A549 (cell line): ENCODE measurements at regions of chr9 and their contacts with region 1.

Region 1: GRCh38 chr9:99140685-99141314 is 35.9 kb downstream of the TGFBR1 start:
- DNase-seq: peak; percentile 44 to 57
- ATAC-seq: peak; percentile 90 to 93; a peak in 5 of 6 replicates
- H3K4me3 ChIP-seq: no peak overlapping the region
- H3K27ac ChIP-seq: no peak overlapping the region
- H3K4me1 ChIP-seq: no peaks in the 10 kb centered on the region
- CTCF ChIP-seq: peak; percentile 84
- EP300 ChIP-seq: no peak
- POLR2A ChIP-seq: no peak
- RAD21 ChIP-seq: peak; percentile 87 to 90

Region 2: GRCh38 chr9:98848450-98849149 is 292.2 kb before region 1 on chr9:
- CTCF ChIA-PET with region 1: interaction called, 90 read pairs
- POLR2A ChIA-PET with region 1: no interaction called
- DNase-seq: peak; percentile 83 to 87
- ATAC-seq: peak; percentile 99 to 100
- H3K4me3 ChIP-seq: no peak overlapping the region
- H3K27ac ChIP-seq: no peak overlapping the region; a peak in 1 of 6 replicates
- H3K4me1 ChIP-seq: no peaks in the 10 kb centered on the region
- CTCF ChIP-seq: peak; percentile 93
- EP300 ChIP-seq: no peak
- POLR2A ChIP-seq: no peak
- RAD21 ChIP-seq: peak; percentile 87 to 95

Region 3: GRCh38 chr9:98974994-98975712 is 165.6 kb before region 1 on chr9:
- CTCF ChIA-PET with region 1: interaction called, 78 read pairs
- POLR2A ChIA-PET with region 1: no interaction called
- DNase-seq: peak; percentile 75 to 86
- ATAC-seq: peak; percentile 90 to 97
- H3K4me3 ChIP-seq: peak overlapping the region; percentile 24; the same call in 2 of the 3 replicates
- H3K27ac ChIP-seq: peak overlapping the region in 1 of 2 experiments; percentile 31; a peak in 1 of 6 replicates
- H3K4me1 ChIP-seq: peaks cover 4% of the 10 kb centered on the region; the same call in 1 of the 3 replicates
- CTCF ChIP-seq: peak; percentile 82
- EP300 ChIP-seq: no peak
- POLR2A ChIP-seq: no peak
- RAD21 ChIP-seq: peak; percentile 73 to 82

Region 4: DNA sequence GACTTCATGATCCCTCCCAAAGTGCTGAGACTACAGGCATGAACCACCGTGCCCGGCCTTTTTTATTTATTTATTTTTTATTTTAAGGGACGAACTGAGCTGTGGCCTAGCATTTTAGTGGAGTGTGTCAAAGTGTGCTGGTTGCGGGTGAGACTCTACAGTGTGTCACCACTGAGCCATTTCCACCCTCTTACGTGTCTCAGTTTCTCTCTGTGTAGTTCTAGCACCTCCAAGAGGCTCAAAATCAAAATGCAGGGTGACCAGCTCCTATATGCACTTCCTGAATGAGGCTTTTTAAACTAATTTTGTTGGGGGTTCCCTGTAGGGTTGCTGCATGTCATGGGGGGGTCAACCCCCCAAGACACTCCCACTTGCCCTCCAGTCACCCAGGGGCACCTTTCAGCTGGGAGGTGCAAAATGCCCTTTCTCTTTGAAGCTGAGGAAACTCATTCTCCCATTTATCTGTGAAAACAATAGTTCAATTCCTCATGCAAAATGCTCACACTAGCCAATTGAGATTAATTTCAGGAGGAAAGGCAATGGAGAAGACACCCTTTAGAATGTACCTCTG is 127.8 kb before region 1 on chr9:
- CTCF ChIA-PET with region 1: interaction called, 14 read pairs
- POLR2A ChIA-PET with region 1: no interaction called
- DNase-seq: no peak
- ATAC-seq: no peak
- H3K4me3 ChIP-seq: no peak overlapping the region
- H3K27ac ChIP-seq: no peak overlapping the region
- H3K4me1 ChIP-seq: no peaks in the 10 kb centered on the region
- CTCF ChIP-seq: no peak
- EP300 ChIP-seq: no peak
- POLR2A ChIP-seq: no peak
- RAD21 ChIP-seq: peak in 1 of 2 experiments; percentile 15; a peak in 1 of 5 replicates

Region 5: DNA sequence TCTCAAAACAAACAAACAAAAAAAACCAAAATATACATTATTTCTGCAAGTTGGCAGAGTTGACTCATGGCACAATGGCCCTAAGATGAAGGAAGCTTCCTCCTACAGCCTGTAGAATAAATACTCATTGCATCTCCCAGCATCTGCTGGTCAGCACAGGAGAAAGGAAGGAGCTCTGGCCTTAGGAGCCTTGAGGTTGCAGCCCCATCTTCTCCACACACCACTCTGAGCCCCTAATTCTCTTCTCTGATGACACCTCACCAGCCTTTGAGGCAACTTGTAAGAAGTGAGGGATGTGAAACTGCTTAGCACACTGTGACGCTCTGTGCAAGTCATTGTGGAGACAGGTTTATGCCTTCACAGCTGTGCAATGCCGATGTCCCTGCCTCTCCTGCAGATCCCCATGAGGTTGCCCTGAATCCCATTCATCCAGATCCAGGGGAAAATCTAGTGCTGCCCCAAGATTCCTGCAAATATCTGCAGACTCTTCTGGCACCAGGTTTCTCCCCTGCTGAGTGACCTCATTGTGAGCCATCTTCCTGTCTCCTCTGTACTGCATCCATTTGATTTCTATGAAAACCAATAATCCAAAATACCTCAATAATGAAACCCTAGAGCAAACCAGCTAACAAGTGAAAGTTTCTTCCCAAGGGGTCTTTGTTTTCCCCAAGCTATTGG is 101.2 kb before region 1 on chr9:
- CTCF ChIA-PET with region 1: no interaction called
- POLR2A ChIA-PET with region 1: no interaction called
- DNase-seq: no peak
- ATAC-seq: no peak; a peak in 1 of 6 replicates
- H3K4me3 ChIP-seq: no peak overlapping the region
- H3K27ac ChIP-seq: peak overlapping the region; percentile 20 to 66; a peak in 3 of 6 replicates
- H3K4me1 ChIP-seq: peaks cover 17% of the 10 kb centered on the region; the same call in 2 of the 3 replicates
- CTCF ChIP-seq: no peak
- EP300 ChIP-seq: no peak
- POLR2A ChIP-seq: no peak
- RAD21 ChIP-seq: no peak

Region 6: GRCh38 chr9:99121604-99122003 is 19.2 kb before region 1 on chr9:
- CTCF ChIA-PET with region 1: interaction called, 14 read pairs
- POLR2A ChIA-PET with region 1: interaction called, 3 read pairs
- DNase-seq: no peak
- ATAC-seq: no peak
- H3K4me3 ChIP-seq: no peak overlapping the region
- H3K27ac ChIP-seq: no peak overlapping the region
- H3K4me1 ChIP-seq: peaks cover 9% of the 10 kb centered on the region; the same call in 2 of the 3 replicates
- CTCF ChIP-seq: no peak
- EP300 ChIP-seq: no peak
- POLR2A ChIP-seq: no peak
- RAD21 ChIP-seq: no peak